ENCODE measurements at regions of chr14 and their contacts with region 1.

Region 1: GRCh38 chr14:93788543-93789227 is 400 bp upstream of the PRIMA1 start:
- DNase-seq: peak in 9 of 10 donors; percentile 23 to 94 (median 51)

Region 2: DNA sequence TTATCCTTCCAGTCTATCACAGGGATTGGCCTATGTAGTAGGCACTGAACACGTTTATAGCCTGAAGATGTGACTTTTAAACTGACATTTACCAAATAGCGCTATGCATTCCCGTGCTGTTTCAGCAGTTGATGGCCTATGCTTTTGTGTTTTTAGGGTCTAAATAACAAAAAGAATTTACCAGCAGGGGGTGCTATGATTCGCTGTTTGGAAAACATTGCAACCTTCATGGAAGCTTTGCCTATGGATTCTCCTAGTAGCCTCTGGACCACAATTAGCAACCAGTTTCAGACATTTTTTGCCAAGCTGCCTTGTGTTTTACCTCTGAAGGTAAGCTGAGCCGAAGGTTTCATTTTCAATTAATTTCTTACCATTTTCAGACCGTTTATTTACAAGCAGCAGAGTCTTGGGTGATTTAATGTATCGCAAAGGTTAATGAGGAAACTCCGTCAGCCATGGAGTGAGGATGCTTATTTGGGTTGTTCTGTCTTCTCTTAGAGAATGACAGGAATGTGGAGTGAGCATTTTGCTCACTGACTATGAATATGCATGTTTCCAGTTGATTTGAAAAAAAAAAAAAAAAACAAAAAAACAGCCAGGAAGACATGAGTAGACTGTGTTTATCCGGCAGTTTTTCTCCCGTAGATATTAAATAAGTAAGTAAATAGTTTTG is 133.5 kb before region 1 on chr14:
- intact Hi-C with region 1: loop called (anchors 1 kb)
- DNase-seq: peak in 1 of 10 donors; percentile 45

Region 3: DNA sequence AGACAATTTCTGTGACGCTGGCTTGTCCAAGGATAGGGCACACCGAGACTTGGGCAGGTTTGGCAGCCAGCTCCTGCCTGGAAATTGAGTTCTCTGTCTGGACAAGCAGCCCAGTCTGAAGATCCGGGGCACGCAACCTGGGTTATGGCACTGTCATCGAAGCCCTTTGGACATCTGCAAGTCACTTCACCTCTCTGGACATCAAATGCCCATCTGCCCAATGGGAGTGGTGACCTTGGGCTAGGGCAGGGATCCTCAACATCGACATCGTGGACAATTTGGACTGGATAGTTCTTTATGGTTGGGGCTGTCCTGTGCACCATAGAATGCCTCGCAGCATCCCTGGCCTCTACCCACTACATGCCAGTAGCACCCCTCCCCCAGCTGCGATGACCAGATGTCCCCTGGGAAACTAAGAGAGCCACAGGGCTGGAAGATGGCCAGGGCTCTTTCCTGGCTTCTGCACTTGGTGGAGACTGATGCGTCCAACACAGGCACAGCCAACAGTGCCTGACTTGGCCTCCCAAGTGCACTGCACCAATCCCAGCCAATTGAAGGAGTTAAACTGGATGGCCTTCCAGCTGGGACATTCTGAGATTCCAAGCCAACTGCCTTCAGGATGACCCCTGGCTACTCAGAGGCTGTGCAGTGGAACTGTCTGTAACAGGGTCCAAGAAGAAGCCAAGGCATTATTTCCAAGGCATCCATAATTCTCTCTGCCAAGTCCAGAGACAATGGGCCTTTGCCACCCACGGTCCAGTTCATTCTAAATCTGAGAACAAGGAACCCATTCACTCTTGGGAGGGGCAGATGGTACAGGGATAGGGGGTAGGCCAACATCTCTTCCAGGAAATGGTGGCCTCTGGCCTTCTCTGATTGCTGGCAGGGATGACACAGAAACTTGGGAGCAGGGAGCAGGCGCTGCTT is 35.8 kb before region 1 on chr14:
- intact Hi-C with region 1: loop called (anchors 1 kb)
- DNase-seq: peak; percentile 68 to 97 (median 85)

Region 4: DNA sequence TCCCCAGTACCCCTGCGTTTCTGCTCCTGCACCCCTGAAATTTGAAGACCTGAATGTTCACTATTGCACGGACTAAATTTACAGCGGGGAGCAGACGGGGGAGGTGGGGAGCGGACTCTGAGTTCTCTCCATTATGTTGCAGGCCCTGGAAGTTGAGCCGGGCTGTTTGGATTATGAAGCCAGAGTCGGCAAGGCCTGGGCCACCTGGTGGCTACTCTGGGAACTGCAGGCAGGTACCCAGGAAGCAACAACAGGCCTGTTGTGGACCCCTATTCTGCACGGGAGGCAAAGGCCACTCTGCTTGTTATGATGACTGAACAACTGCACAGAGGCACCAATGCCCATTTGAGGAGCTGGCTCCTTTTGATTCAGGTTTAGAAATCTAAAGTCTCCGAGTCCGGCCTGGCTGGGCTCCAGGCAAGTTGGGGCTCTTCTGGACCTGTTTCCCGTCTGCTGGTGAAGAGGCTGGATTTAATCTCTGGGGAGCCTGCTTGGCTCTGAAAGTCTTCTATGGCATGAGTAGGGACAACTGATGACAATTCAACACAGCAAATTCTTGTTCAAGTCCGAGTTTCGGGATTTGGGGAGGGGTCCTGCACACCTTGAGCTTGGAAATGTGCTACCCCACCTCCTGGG is 104.4 kb after region 1 on chr14:
- intact Hi-C with region 1: loop called (anchors 5 kb)
- DNase-seq: peak; percentile 50 to 95 (median 80)

Measured in posterior cingulate gyrus (tissue), 11 donors.